Activated T-helper 2 cell treated with anti-CD3 and anti-CD28 coated beads, Interferon-gamma antibody, Interleukin-2, Interleukin-4, amounts not matched to agents 10 μg/mL and 5 μg/mL and 100 μg/mL, durations not matched to agents 14 hours and 24 hours and 36 hours (primary cell): ENCODE measurements at regions of chr10 and their contacts with region 1.

Region 1: GRCh38 chr10:80078448-80079311 is at the start of gene TMEM254:
- DNase-seq: peak; percentile 82
- H3K4me3 Mint-ChIP-seq: peak within 1 kb of the TSS; percentile 96
- H3K27ac Mint-ChIP-seq: peak within 1 kb of the TSS; percentile 91
- H3K4me1 Mint-ChIP-seq: peaks cover 30% of the 10 kb centered on the region
- H3K27me3 Mint-ChIP-seq: no peaks in the 10 kb centered on the region
- total RNA-seq, gene TMEM254: 11.4 and 12.6 TPM in 2 replicates

Region 2: GRCh38 chr10:80144067-80144695 is 65.5 kb after region 1 on chr10:
- intact Hi-C with region 1: no loop called
- DNase-seq: no peak
- H3K4me3 Mint-ChIP-seq: peak overlapping the region; percentile 70
- H3K27ac Mint-ChIP-seq: no peak overlapping the region
- H3K4me1 Mint-ChIP-seq: peaks cover 16% of the 10 kb centered on the region
- H3K27me3 Mint-ChIP-seq: peaks cover 9% of the 10 kb centered on the region

Region 3: DNA sequence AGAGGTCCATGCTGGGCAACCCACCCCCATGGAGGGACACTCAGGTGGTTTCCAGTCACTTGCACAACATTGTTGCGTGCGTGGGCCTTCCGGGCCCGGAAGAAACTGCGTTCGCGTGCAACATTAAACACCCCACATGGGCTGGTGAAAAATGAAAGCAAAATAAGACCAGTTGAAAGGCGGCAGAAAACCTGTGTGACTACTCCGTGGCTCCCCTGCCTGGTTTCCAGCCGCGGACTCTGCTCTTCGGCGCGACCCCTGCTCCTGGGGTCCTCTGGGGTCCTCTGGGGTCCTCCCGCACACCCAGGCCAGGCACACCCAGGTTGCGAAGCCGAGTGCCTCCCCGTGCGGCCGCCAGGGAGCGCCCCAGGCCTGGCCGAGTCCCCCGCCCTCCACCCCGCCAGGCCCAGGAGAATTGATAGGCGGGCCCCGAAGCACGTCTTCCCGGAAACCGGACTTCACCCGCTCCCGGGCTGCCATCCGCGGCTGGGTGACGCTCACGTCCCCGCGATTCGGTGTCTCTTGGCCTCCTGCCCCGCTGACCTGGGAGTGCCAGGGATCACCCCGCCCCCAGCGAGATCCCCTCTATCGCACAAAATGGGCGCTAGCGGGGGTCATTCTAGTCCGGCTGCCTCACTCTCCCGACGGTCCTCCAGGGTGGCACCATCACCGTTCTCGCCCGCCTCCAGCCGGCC is 457.1 kb after region 1 on chr10:
- intact Hi-C with region 1: loop called (anchors 5 kb)
- DNase-seq: peak; percentile 69
- H3K4me3 Mint-ChIP-seq: peak overlapping the region; percentile 90
- H3K27ac Mint-ChIP-seq: peak overlapping the region; percentile 95
- H3K4me1 Mint-ChIP-seq: peaks cover 30% of the 10 kb centered on the region
- H3K27me3 Mint-ChIP-seq: no peaks in the 10 kb centered on the region